ENCODE measurements at regions of chr7 and their contacts with region 1.

Region 1: GRCh38 chr7:89622838-89623672 is 531.2 kb upstream of the STEAP1 start:
- DNase-seq: peak; percentile 37
- H3K4me3 ChIP-seq: no peak overlapping the region
- H3K27ac ChIP-seq: no peak overlapping the region
- H3K4me1 ChIP-seq: no peaks in the 10 kb centered on the region; a peak in 2 of 4 replicates
- H3K27me3 ChIP-seq: peaks cover 8% of the 10 kb centered on the region; the same call in 1 of the 2 replicates
- CTCF ChIP-seq: peak; percentile 95
- EP300 ChIP-seq: no peak
- RAD21 ChIP-seq: peak; percentile 98

Region 2: GRCh38 chr7:89607792-89608191 is 15.3 kb before region 1 on chr7:
- CTCF ChIA-PET with region 1: interaction called, 20 read pairs
- POLR2A ChIA-PET with region 1: no interaction called
- DNase-seq: no peak
- H3K4me3 ChIP-seq: no peak overlapping the region
- H3K27ac ChIP-seq: no peak overlapping the region
- H3K4me1 ChIP-seq: no peaks in the 10 kb centered on the region
- H3K27me3 ChIP-seq: no peaks in the 10 kb centered on the region
- CTCF ChIP-seq: no peak
- EP300 ChIP-seq: no peak
- RAD21 ChIP-seq: no peak

Measured in SK-N-SH (cell line).